ENCODE measurements at regions of chrX and their contacts with region 1.

Region 1: GRCh38 chrX:73855546-73855945 is 292.5 kb downstream of the CHIC1 start:
- DNase-seq: peak; percentile 19
- H3K4me3 ChIP-seq: no peak overlapping the region
- H3K27ac ChIP-seq: no peak overlapping the region
- H3K4me1 ChIP-seq: no peaks in the 10 kb centered on the region
- H3K27me3 ChIP-seq: no peaks in the 10 kb centered on the region
- CTCF ChIP-seq: peak; percentile 70

Region 2: DNA sequence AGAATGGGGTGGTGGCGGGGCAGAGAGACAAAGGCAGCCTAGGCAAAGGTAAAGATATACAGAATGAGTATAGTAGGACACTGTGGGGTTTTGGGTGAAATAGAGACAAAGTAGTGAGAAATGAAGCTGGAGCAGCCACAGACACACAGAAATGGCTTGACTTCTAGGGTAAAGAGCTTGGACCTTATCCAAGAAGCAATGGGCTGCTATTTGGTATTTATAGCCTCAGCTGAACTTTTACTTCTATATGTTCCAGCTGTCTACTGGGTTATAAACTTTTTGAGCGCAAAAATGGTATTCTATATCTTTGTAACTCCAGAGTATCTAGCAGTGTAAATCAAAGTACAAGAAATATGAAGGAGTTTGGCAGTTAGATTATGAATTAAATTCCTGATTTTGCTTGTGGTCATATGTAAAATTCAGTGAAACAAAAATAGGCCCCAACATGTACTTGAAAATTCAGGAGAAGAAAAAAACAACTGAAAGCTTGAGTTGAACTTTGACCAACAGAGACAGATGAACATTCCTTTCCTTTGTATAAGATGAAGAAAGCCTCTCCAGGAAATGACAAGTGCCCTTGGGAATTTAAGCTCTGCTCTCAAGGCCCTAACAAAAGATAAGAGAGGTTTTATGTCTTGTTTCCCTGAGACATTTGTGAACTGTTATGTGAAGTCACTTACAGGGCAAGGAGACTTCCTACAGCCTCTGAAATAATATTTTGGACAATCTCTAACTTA is 61.6 kb after region 1 on chrX:
- intact Hi-C with region 1: no loop called
- DNase-seq: no peak
- H3K4me3 ChIP-seq: no peak overlapping the region
- H3K27ac ChIP-seq: no peak overlapping the region
- H3K4me1 ChIP-seq: no peaks in the 10 kb centered on the region
- H3K27me3 ChIP-seq: no peaks in the 10 kb centered on the region
- CTCF ChIP-seq: no peak

Region 3: DNA sequence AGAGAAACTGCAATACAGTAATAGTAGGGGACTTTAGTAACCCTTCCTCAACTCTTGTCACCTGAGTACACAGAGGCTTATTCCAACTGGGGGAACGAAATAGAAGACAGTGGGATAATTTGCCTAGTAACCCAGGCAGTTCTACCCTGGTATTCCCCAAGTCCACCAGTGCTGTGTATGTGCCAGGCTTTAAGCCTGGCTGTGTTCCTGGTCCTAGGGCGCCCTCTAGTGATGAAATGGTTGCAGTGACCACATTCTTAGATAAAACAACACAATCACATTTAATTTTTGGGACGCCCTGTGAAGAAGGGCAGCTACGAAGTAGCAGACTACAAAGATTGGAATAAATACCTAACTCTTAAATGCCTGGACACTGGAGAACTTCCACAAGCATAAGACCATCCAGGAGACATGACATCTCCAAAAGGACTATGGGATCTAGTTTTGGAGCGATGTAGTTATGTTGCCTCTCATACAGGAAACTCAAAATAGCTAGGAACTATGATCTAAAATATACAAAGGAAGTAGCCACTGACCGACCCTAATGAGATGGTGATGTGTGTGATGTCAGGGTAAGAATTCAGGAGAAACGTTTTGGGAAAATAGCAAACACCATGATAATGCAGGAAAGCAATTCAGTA is 160.0 kb after region 1 on chrX:
- intact Hi-C with region 1: loop called (anchors 5 kb)
- DNase-seq: peak; percentile 14
- H3K4me3 ChIP-seq: no peak overlapping the region
- H3K27ac ChIP-seq: no peak overlapping the region
- H3K4me1 ChIP-seq: no peaks in the 10 kb centered on the region
- H3K27me3 ChIP-seq: no peaks in the 10 kb centered on the region
- CTCF ChIP-seq: peak; percentile 77

Region 4: DNA sequence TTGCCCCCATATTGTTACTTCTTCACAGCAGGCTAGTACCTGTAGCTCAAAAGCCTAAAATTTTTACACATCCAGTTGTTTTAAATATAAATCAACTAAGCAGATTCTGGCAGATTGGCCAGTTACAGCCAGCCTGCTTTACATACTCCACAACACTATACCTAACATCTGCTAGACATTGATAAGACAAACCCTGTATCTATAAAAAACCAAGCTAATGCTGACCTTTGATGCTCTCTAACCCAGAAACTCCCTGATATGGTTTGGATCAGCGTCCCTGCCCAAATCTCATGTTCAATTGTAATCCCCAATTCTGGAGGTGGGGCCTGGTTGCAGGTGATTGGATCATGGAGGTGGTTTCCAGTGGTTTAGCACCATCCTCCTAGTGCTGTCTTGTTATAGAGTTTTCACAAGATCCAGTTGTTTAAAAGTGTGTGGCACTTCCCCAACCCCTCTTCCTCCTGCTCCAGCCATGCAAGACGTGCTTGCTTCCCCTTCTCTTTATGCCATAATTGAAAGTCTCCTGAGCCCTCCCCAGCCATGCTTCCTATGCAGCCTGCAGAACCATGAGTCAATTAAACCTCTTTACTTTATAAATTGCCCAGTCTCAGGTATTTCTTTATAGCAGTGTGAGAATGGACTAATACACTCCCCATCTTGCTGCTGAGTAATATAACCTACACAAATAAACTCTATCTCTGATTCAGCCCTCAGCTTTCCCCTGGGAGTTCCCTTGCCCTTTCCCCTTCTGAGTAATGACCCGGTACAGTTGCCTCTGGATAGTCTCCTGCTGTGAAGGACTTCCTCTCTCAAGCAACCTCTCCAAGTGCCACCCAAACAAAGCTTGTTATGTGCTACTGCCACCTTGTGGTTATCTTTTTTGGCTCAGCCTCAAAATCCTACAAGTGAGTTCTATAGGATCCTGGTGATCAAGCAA is 488.1 kb after region 1 on chrX:
- intact Hi-C with region 1: loop called (anchors 5 kb)
- DNase-seq: no peak
- H3K4me3 ChIP-seq: no peak overlapping the region
- H3K27ac ChIP-seq: no peak overlapping the region
- H3K4me1 ChIP-seq: no peaks in the 10 kb centered on the region
- H3K27me3 ChIP-seq: no peaks in the 10 kb centered on the region
- CTCF ChIP-seq: peak; percentile 63

Measured in left ventricle myocardium inferior (tissue), 1 donor.